ENCODE measurements at regions of chr6 and their contacts with region 1.

Region 1: DNA sequence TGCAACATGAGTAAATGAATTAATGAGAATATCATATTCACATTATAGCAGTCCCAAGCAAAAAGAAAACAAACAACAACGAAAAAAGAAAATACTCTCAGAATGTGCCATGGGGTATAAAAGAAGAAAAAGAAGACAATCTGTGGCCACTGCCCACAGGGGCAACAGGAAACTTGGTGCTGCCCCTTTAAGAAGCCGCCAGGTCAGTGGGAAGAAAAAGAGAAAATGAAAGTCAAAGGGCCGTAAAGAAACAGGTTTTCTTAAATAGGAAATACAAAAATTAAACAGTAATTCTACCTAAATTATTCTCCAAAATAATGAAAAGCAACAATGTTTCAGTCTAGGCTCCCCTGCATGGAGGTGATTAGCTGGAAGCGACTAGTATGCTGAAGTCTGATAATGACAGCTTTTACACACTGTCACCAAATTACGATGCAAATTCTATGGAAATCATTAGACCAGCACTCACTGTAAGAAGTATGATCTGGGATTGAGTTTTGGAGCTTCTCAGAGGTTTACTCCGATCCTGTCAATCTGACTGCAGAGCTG is 23.6 kb downstream of the GMDS start:
- DNase-seq: no peak
- H3K4me3 ChIP-seq: peak overlapping the region; percentile 49 to 85 (median 62)
- H3K27ac ChIP-seq: peak overlapping the region; percentile 43
- H3K4me1 ChIP-seq: peaks cover 21% of the 10 kb centered on the region
- H3K27me3 ChIP-seq: no peaks in the 10 kb centered on the region
- CTCF ChIP-seq: no peak
- POLR2A ChIP-seq: no peak

Region 2: GRCh38 chr6:2203264-2203663 is 18.5 kb before region 1 on chr6:
- CTCF ChIA-PET with region 1: interaction called, 31 read pairs
- POLR2A ChIA-PET with region 1: no interaction called
- dilution Hi-C with region 1: no loop called
- intact Hi-C with region 1: loop called (anchors 1 kb)
- DNase-seq: peak; percentile 94
- H3K4me3 ChIP-seq: no peak overlapping the region
- H3K27ac ChIP-seq: peak overlapping the region; percentile 72
- H3K4me1 ChIP-seq: peaks cover 17% of the 10 kb centered on the region
- H3K27me3 ChIP-seq: no peaks in the 10 kb centered on the region
- CTCF ChIP-seq: no peak
- POLR2A ChIP-seq: no peak

Region 3: DNA sequence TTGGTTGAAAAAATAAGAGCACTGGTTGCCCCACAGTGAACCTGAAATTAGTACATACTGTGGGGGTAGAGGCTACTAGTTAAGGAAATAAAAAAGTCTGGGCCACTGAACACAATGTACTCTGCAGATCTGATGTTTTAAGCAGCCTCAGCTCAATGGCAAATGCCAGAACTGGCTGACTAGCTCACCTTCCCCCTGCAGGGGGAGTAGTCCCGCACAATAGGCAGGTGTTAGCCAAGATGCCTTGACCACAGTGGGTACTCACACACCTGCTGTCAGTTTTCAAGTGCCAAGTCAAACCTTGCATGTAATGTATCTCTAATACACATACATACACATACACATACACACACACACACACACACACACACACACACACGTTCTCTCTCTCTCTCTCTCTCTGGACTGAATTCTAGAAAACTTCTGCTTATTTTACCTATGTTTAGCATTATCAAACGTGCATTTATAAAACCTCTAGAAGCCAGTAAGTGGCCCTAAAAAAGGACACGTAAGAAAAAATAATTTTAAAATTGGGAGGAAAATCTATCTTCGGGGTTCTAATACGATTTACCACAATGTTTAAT is 12.5 kb before region 1 on chr6:
- CTCF ChIA-PET with region 1: interaction called, 31 read pairs
- POLR2A ChIA-PET with region 1: no interaction called
- dilution Hi-C with region 1: no loop called
- intact Hi-C with region 1: no loop called
- DNase-seq: peak; percentile 64
- H3K4me3 ChIP-seq: no peak overlapping the region
- H3K27ac ChIP-seq: no peak overlapping the region
- H3K4me1 ChIP-seq: no peaks in the 10 kb centered on the region
- H3K27me3 ChIP-seq: no peaks in the 10 kb centered on the region
- CTCF ChIP-seq: peak; percentile 42 to 75
- POLR2A ChIP-seq: no peak

Measured in endothelial cell of umbilical vein (primary cell).